ENCODE measurements at regions of chr13 and their contacts with region 1.

Region 1: GRCh38 chr13:68984688-68985319 is 1122.8 kb upstream of the ATXN8OS start:
- DNase-seq: no peak
- H3K4me3 ChIP-seq: no peak overlapping the region
- H3K27ac ChIP-seq: no peak overlapping the region
- H3K4me1 ChIP-seq: no peaks in the 10 kb centered on the region
- CTCF ChIP-seq: no peak

Region 2: DNA sequence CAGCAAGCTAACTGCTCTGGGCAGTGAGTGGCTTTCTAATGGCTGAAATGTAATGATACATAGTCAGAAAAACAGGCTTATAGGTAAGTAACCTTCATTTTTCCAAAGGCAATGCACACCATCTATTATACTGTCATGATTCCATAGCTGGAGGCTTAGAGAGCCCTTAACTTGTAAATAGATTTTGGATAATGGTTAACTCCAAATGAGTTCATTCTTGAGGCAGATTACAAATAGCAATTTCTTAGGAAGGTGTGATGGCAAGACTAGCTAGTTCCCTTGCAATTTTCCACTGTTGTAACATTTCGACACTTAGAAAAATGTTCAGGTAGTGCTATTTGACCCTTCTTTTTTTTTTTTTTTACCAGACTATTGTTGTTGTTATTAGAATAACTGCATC is 964.9 kb before region 1 on chr13:
- CTCF ChIA-PET with region 1: no interaction called
- POLR2A ChIA-PET with region 1: interaction called, 10 read pairs
- intact Hi-C with region 1: no loop called
- DNase-seq: no peak
- H3K4me3 ChIP-seq: no peak overlapping the region
- H3K27ac ChIP-seq: no peak overlapping the region
- H3K4me1 ChIP-seq: no peaks in the 10 kb centered on the region
- CTCF ChIP-seq: no peak

Measured in OCI-LY7 (cell line).